ENCODE measurements at regions of chr17 and their contacts with region 1.

Region 1: DNA sequence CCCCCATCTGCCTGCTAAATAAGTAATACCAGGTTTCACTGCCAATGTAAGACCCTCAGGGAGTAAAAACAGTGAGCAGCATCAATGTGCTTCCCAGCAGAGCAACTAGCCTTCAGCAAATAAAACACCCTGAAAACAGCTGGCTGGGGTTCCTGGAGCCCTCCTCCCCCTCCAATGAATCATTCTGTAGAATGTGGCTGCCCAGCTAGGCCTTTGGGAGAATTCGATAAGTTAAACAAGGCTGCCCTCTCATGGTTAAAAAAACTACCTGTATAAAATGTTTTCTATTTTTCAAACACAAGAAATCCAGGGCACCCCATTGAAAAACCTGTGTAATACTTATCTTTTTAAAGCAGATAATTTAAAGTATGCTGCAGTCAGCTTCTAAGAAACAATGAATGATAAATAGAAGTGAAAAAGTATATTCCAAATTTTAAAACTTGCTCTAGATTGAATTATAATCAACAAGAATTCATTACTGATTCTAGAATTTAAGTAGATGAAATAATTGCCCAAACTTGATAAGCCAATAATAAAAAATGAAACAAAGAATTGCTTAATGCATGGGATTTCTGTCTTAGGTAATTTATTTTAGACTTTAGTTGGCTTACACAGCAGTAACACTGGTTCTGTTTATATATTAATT is 9.4 kb upstream of the TOM1L1 start:
- DNase-seq: peak in 1 of 2 experiments; percentile 61
- H3K4me3 ChIP-seq: no peak overlapping the region
- H3K4me3 Mint-ChIP-seq: no peak overlapping the region
- H3K27ac Mint-ChIP-seq: no peak overlapping the region
- H3K4me1 ChIP-seq: no peaks in the 10 kb centered on the region
- H3K4me1 Mint-ChIP-seq: no peaks in the 10 kb centered on the region
- H3K27me3 ChIP-seq: no peaks in the 10 kb centered on the region
- H3K27me3 Mint-ChIP-seq: peaks cover 6% of the 10 kb centered on the region
- CTCF ChIP-seq: peak; percentile 39 to 64

Region 2: DNA sequence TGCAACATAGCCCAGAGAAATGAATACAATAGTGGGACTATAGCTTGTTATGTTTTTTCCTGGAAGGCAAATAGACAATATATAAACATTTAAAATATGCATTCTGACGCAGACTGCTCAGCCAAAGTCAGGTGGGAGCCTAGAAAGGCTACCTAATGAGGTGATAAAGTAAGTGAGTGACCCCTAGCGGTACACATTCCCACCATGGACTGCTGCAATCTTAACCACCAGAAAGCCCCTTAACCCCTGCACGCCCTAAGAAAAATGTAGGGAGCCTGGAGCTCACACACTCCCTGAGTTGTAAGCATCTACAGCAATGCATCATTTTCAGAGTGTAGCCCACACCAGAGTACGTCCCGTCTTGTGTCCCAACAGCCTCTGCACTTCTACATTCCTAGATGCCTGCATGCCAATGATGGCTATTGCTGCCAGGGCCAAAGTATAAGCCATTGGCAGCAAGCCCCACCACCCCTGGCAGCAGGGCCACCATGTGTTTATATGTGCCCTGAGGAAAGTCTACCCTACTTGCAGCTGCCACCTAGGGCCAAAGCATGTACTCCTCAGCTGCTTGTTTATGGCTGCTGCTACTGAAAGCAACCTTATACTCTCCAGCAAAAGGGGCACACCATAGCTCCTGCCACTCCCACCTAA is 941.0 kb before region 1 on chr17:
- CTCF ChIA-PET with region 1: no interaction called
- POLR2A ChIA-PET with region 1: no interaction called
- intact Hi-C with region 1: loop called (anchors 2 kb)
- DNase-seq: peak; percentile 47 to 55
- H3K4me3 ChIP-seq: no peak overlapping the region
- H3K4me3 Mint-ChIP-seq: no peak overlapping the region
- H3K27ac Mint-ChIP-seq: no peak overlapping the region
- H3K4me1 ChIP-seq: no peaks in the 10 kb centered on the region
- H3K4me1 Mint-ChIP-seq: no peaks in the 10 kb centered on the region
- H3K27me3 ChIP-seq: no peaks in the 10 kb centered on the region
- H3K27me3 Mint-ChIP-seq: no peaks in the 10 kb centered on the region
- CTCF ChIP-seq: peak; percentile 59 to 67

Region 3: DNA sequence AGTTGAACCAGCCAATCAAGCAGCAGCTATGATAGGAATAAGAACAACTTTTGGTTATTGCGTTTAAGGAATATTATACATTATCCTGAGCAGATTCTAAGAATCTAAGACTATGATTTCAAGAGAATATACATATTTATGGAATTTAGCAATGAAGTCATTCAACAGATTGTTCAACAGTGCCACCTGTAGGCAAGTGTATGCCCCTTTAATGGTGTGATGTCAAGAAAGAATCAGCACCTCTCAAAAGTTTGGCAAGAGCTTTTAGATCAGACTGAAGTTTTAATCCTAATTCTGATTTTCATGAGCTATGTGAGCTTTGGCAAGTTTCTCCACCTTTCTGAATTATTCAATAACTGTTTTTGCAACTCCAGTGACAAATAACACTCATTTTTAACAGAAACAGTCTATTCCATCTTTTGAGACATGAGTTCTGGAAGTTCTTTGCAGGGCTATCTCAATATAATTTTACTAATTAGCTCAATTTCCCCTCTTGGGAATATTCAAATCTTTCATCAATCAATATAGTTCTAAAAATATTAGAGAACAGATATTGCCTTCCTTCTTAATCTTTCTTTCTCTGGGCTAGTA is 464.9 kb before region 1 on chr17:
- CTCF ChIA-PET with region 1: no interaction called
- POLR2A ChIA-PET with region 1: no interaction called
- intact Hi-C with region 1: loop called (anchors 5 kb)
- DNase-seq: peak in 1 of 2 experiments; percentile 14
- H3K4me3 ChIP-seq: no peak overlapping the region
- H3K4me3 Mint-ChIP-seq: no peak overlapping the region
- H3K27ac Mint-ChIP-seq: no peak overlapping the region
- H3K4me1 ChIP-seq: no peaks in the 10 kb centered on the region
- H3K4me1 Mint-ChIP-seq: no peaks in the 10 kb centered on the region
- H3K27me3 ChIP-seq: no peaks in the 10 kb centered on the region
- H3K27me3 Mint-ChIP-seq: no peaks in the 10 kb centered on the region
- CTCF ChIP-seq: peak; percentile 28 to 54

Region 4: GRCh38 chr17:54518706-54519105 is 372.6 kb before region 1 on chr17:
- CTCF ChIA-PET with region 1: interaction called, 3 read pairs
- POLR2A ChIA-PET with region 1: no interaction called
- intact Hi-C with region 1: loop called (anchors 1 kb)
- DNase-seq: no peak
- H3K4me3 ChIP-seq: no peak overlapping the region
- H3K4me3 Mint-ChIP-seq: no peak overlapping the region
- H3K27ac Mint-ChIP-seq: no peak overlapping the region
- H3K4me1 ChIP-seq: peaks cover 22% of the 10 kb centered on the region
- H3K4me1 Mint-ChIP-seq: peaks cover 24% of the 10 kb centered on the region
- H3K27me3 ChIP-seq: no peaks in the 10 kb centered on the region
- H3K27me3 Mint-ChIP-seq: peaks cover 4% of the 10 kb centered on the region
- CTCF ChIP-seq: no peak

Region 5: DNA sequence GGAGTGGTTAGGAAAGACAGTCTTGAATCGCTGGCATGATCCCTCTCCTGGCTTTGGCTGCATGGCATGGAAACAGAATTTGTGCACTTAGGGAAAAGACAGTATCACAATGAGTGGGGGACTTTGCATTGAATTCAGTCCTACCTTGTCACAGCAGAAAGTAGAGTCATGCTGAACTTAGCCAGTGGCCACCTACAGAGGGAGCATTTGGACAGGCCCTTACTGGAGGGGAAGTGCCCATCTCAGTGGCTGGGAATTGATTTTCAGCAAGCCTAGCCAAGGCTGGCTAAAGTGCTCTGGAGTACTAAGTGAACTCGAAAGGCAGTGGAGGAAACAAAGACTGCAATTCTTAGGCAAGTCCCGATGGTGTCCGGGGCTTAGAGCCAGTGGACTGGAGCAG is 355.0 kb before region 1 on chr17:
- CTCF ChIA-PET with region 1: no interaction called
- POLR2A ChIA-PET with region 1: no interaction called
- intact Hi-C with region 1: loop called (anchors 5 kb)
- DNase-seq: no peak
- H3K4me3 ChIP-seq: no peak overlapping the region
- H3K4me3 Mint-ChIP-seq: no peak overlapping the region
- H3K27ac Mint-ChIP-seq: peak overlapping the region; percentile 30
- H3K4me1 ChIP-seq: peaks cover 20% of the 10 kb centered on the region
- H3K4me1 Mint-ChIP-seq: peaks cover 19% of the 10 kb centered on the region
- H3K27me3 ChIP-seq: no peaks in the 10 kb centered on the region
- H3K27me3 Mint-ChIP-seq: no peaks in the 10 kb centered on the region
- CTCF ChIP-seq: no peak

Region 6: DNA sequence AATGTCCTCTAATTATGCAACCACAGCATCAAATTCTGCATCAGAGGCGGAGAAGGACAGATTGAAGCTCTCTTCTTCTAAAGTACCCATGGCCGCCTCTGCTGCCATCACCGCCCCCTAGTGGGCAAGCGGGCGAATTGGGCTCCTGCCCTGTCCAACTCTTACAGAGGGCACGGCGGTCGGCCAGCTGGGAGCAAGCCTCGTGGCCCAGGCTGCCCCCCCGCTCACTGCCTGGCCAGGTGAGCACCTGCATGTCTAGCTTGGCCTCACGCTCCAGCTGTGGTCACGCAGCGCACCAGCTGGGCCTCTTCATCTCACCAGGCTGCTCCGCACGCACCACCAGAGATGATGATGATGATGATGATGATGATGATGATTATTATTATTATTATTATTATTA is 136.7 kb before region 1 on chr17:
- CTCF ChIA-PET with region 1: no interaction called
- POLR2A ChIA-PET with region 1: no interaction called
- intact Hi-C with region 1: loop called (anchors 10 kb)
- DNase-seq: peak in 1 of 2 experiments; percentile 36
- H3K4me3 ChIP-seq: no peak overlapping the region
- H3K4me3 Mint-ChIP-seq: no peak overlapping the region
- H3K27ac Mint-ChIP-seq: no peak overlapping the region
- H3K4me1 ChIP-seq: no peaks in the 10 kb centered on the region
- H3K4me1 Mint-ChIP-seq: no peaks in the 10 kb centered on the region
- H3K27me3 ChIP-seq: no peaks in the 10 kb centered on the region
- H3K27me3 Mint-ChIP-seq: peaks cover 4% of the 10 kb centered on the region
- CTCF ChIP-seq: peak in 1 of 2 experiments; percentile 42

Region 7: GRCh38 chr17:54948380-54948779 is 57.1 kb after region 1 on chr17:
- CTCF ChIA-PET with region 1: no interaction called
- POLR2A ChIA-PET with region 1: no interaction called
- intact Hi-C with region 1: no loop called
- DNase-seq: no peak
- H3K4me3 ChIP-seq: no peak overlapping the region
- H3K4me3 Mint-ChIP-seq: no peak overlapping the region
- H3K27ac Mint-ChIP-seq: no peak overlapping the region
- H3K4me1 ChIP-seq: no peaks in the 10 kb centered on the region
- H3K4me1 Mint-ChIP-seq: peaks cover 11% of the 10 kb centered on the region
- H3K27me3 ChIP-seq: no peaks in the 10 kb centered on the region
- H3K27me3 Mint-ChIP-seq: no peaks in the 10 kb centered on the region
- CTCF ChIP-seq: no peak

Measured in Caco-2 (cell line).